H1 (cell line): ENCODE measurements at regions of chr11 and their contacts with region 1.

Region 1: DNA sequence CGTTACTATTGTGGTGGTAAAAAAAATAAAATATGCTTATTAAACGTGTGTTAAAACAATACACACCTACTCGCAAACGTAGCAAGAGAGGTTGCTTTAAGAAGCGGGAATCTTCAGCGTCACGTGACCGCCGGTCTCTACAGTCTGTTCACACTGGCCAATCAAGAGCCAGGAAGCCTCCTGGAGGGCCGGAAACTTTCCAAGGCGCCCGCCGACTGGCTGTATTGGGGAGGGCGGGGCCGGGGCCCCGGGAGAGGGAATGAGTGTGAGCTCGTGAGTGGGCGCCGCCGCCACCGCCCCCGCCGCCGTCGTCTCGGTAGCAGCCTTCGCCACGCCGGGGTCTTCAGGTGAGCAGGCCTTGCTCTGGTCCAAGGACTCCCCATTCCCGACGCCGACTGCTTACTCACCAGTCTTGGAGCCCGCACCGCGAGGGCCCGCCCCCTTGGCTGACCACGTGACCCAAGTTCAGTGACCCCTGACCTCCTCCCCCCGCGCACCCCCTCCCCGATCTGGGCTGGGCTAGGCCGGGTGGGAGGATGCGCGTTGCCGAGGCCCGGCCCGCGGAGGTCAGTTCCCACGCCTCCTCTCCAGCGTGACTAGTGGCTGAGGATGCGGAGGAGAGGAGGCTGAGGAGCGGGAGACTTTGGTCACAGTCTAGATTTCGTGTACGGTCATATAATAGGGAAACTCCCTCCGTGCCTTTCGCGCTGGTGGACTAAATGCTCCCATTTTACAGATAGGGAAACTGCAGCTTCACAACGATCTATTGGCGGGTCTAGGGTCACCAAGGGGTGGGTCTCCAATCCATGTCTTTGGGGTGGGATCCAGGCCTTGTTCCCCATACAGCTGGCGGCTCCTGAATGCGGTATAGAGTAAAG is at the start of gene TAF6L:
- DNase-seq: peak; percentile 75 to 98
- H3K4me3 ChIP-seq: peak within 1 kb of the TSS; percentile 77 to 95 (median 92)
- H3K27ac ChIP-seq: peak within 1 kb of the TSS; percentile 72
- H3K4me1 ChIP-seq: peaks cover 0 to 9% (median 5%) of the 10 kb centered on the region in 4 experiments; a peak in 6 of 7 replicates
- H3K27me3 ChIP-seq: no peaks in the 10 kb centered on the region
- CTCF ChIP-seq: no peak
- EP300 ChIP-seq: no peak
- POLR2A ChIP-seq: peak; percentile 78 to 95
- RAD21 ChIP-seq: no peak
- total RNA-seq, gene TAF6L: 29.6 and 31.9 TPM in 2 replicates

Region 2: DNA sequence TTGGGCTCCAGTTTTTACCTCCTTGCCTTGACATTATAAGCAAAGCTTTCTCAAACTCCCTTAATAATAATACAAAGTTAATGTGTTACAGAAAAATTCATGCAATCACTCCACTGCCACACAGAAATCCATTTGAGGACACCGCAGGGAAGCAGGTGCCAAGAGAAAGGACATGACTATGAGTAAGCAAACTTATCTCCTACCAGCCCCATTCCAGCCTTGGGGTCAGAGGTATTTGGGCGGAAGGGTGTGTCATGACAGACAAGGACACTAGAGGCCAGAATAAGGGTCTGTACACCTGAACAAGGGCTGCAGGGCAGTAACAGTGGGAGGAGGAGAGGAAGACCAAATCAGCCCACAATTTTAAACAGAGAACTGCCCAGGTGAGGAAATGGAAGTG is 58.0 kb before region 1 on chr11:
- CTCF ChIA-PET with region 1: interaction called, 26 read pairs
- POLR2A ChIA-PET with region 1: interaction called, 19 read pairs
- DNase-seq: no peak
- H3K4me3 ChIP-seq: no peak overlapping the region
- H3K27ac ChIP-seq: peak overlapping the region; percentile 13; the same call in 1 of the 2 replicates
- H3K4me1 ChIP-seq: peaks cover 0 to 27% (median 11%) of the 10 kb centered on the region in 4 experiments; a peak in 6 of 7 replicates
- H3K27me3 ChIP-seq: no peaks in the 10 kb centered on the region; a peak in 1 of 7 replicates
- CTCF ChIP-seq: no peak
- EP300 ChIP-seq: no peak
- POLR2A ChIP-seq: no peak
- RAD21 ChIP-seq: no peak

Region 3: DNA sequence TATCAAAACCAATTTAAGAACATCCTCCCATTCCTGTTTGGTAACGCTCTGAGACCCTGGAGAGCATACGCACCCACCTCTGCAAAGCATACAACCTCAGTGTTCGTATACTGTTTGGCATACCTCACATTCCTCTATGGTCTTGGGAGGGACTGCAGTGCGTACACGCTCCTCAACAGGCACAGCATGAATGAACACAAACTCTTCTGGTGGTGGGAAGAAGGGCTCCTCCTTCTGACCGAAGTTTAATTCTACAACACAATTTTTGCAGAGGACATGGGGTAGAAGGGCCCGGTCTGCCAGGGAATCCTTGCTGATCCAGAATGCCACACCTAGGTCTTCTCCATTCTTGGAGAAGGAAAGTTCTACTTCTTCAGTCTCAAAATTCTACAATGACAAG is 49.4 kb before region 1 on chr11:
- CTCF ChIA-PET with region 1: interaction called, 13 read pairs
- POLR2A ChIA-PET with region 1: interaction called, 99 read pairs
- DNase-seq: no peak
- H3K4me3 ChIP-seq: no peak overlapping the region
- H3K27ac ChIP-seq: no peak overlapping the region
- H3K4me1 ChIP-seq: no peaks in the 10 kb centered on the region; a peak in 3 of 7 replicates
- H3K27me3 ChIP-seq: no peaks in the 10 kb centered on the region
- CTCF ChIP-seq: 0 out of 4 replicates have a peak, but pooled peaks of 1 of the 3 experiments have one; percentile 10
- EP300 ChIP-seq: no peak
- POLR2A ChIP-seq: no peak
- RAD21 ChIP-seq: peak in 1 of 2 experiments; percentile 6; a peak in 1 of 4 replicates

Region 4: DNA sequence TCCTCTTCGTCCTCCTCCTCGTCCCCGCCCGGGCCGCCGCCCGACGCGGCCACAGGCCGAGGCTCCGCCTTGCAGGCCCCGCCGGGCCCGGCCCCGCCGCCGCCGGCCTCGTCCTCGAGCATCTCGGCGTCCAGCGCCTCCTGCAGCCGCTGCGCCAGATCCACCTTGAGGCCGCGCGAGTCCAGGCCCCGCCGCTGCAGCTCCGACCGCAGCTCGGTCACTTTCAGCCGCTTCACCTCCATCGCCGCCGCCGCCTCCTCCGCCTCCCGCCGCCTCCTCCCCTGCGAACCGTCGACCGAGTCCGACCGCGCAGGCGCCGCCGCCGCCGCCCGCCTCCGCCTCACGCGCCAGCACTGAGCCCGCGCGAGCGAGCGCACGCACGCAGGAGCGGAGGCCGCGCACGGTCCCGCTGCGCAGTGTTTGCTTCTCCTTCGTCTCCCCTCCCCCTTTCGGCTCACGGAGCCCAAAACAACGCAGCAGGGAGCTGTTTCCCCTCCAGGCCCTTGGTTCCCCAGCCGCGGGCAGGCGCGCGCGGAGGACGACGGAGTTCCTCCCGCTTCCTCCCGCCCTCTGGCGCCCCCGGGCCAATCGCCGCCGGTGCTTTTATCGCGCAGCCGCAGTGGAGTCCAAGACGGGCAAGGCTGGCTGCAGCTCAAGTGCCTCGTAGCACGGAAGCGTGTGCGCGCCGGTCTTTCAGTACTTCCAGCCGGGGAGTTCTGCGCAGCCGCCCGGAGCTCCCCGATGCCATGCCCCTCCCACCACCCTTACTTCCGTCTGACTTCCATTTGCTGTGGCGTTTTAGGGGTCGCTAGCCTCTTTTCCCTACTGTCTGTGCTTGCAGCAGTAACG is 44.2 kb before region 1 on chr11 and contains the start of gene HNRNPUL2:
- CTCF ChIA-PET with region 1: interaction called, 45 read pairs
- POLR2A ChIA-PET with region 1: interaction called, 99 read pairs
- DNase-seq: peak; percentile 94 to 97
- H3K4me3 ChIP-seq: peak within 1 kb of the TSS; percentile 87 to 98 (median 96)
- H3K27ac ChIP-seq: peak within 1 kb of the TSS; percentile 92
- H3K4me1 ChIP-seq: no peaks in the 10 kb centered on the region; a peak in 3 of 7 replicates
- H3K27me3 ChIP-seq: no peaks in the 10 kb centered on the region
- CTCF ChIP-seq: no peak
- EP300 ChIP-seq: 0 out of 3 replicates have a peak, but pooled peaks of 1 of the 2 experiments have one; percentile 25
- POLR2A ChIP-seq: peak; percentile 90
- RAD21 ChIP-seq: no peak
- total RNA-seq, gene HNRNPUL2: 44.3 and 46.4 TPM in 2 replicates

Region 5: GRCh38 chr11:62732801-62733200 is 38.6 kb before region 1 on chr11:
- CTCF ChIA-PET with region 1: interaction called, 45 read pairs
- POLR2A ChIA-PET with region 1: interaction called, 99 read pairs
- DNase-seq: no peak
- H3K4me3 ChIP-seq: no peak overlapping the region
- H3K27ac ChIP-seq: no peak overlapping the region
- H3K4me1 ChIP-seq: no peaks in the 10 kb centered on the region
- H3K27me3 ChIP-seq: no peaks in the 10 kb centered on the region
- CTCF ChIP-seq: no peak
- EP300 ChIP-seq: no peak
- POLR2A ChIP-seq: no peak
- RAD21 ChIP-seq: peak; percentile 51 to 56; a peak in 3 of 4 replicates

Region 6: DNA sequence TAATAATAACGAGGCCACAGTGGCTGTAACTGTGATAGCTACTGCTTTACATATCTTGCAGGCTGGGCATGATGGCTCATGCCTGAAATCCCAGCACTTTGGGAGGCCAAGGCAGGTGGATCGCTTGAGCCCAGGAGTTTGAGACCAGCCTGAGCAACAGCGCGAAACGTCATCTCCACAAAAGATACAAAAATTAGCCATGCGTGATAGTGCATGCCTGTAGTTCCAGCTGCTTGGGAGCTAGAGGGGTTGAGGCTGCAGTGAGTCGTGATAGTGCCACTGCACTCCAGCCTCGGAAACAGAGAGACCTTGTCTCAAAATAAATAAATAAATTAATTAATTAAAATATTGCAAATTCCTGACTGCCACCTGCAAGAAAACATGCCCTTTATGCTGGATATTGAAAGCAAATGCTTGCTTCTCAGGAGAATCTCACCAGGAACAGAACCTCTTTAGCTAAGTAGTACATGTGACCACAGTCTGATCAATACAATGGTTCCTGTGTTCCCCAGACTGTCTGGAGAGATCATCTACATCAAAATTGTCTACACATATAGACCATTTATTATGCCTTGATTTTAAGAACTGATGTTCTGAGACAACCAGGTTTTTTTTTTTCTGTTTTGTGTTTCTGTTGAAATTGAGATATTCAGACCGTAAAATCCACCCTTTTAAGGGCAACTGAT is 23.8 kb before region 1 on chr11:
- CTCF ChIA-PET with region 1: interaction called, 48 read pairs
- POLR2A ChIA-PET with region 1: interaction called, 145 read pairs
- DNase-seq: no peak
- H3K4me3 ChIP-seq: no peak overlapping the region
- H3K27ac ChIP-seq: no peak overlapping the region
- H3K4me1 ChIP-seq: no peaks in the 10 kb centered on the region
- H3K27me3 ChIP-seq: no peaks in the 10 kb centered on the region
- CTCF ChIP-seq: no peak
- EP300 ChIP-seq: no peak
- POLR2A ChIP-seq: no peak
- RAD21 ChIP-seq: no peak

Region 7: GRCh38 chr11:62753736-62754603 is 17.4 kb before region 1 on chr11 and contains the start of gene ZBTB3:
- CTCF ChIA-PET with region 1: interaction called, 48 read pairs
- POLR2A ChIA-PET with region 1: interaction called, 145 read pairs
- DNase-seq: peak; percentile 97 to 99
- H3K4me3 ChIP-seq: peak within 1 kb of the TSS; percentile 74 to 89 (median 82)
- H3K27ac ChIP-seq: peak within 1 kb of the TSS; percentile 86
- H3K4me1 ChIP-seq: peaks cover 4 to 9% (median 6%) of the 10 kb centered on the region in 4 experiments
- H3K27me3 ChIP-seq: no peaks in the 10 kb centered on the region
- CTCF ChIP-seq: no peak
- EP300 ChIP-seq: no peak
- POLR2A ChIP-seq: peak; percentile 37 to 79
- RAD21 ChIP-seq: 0 out of 4 replicates have a peak, but pooled peaks of 1 of the 2 experiments have one; percentile 6
- total RNA-seq, gene ZBTB3: 76.5 and 76.9 TPM in 2 replicates

Region 8: GRCh38 chr11:63280920-63281319 is 509.5 kb after region 1 on chr11:
- CTCF ChIA-PET with region 1: no interaction called
- POLR2A ChIA-PET with region 1: no interaction called
- DNase-seq: no peak
- H3K4me3 ChIP-seq: no peak overlapping the region
- H3K27ac ChIP-seq: no peak overlapping the region
- H3K4me1 ChIP-seq: no peaks in the 10 kb centered on the region
- H3K27me3 ChIP-seq: 0 out of 7 replicates have a peak, but pooled peaks cover 0 to 3% (median 0%) of the 10 kb centered on the region in 4 experiments
- CTCF ChIP-seq: no peak
- EP300 ChIP-seq: no peak
- POLR2A ChIP-seq: no peak
- RAD21 ChIP-seq: no peak